ENCODE measurements at regions of chr12 and their contacts with region 1.

Region 1: GRCh38 chr12:49188914-49189367 is at the start of gene TUBA1A:
- DNase-seq: peak; percentile 100
- H3K4me3 ChIP-seq: peak within 1 kb of the TSS; percentile 94
- H3K27ac ChIP-seq: peak within 1 kb of the TSS; percentile 89
- H3K4me1 ChIP-seq: peaks cover 21% of the 10 kb centered on the region
- H3K27me3 ChIP-seq: no peaks in the 10 kb centered on the region
- CTCF ChIP-seq: no peak
- total RNA-seq, gene TUBA1A: 421 and 504 TPM in 2 replicates

Region 2: DNA sequence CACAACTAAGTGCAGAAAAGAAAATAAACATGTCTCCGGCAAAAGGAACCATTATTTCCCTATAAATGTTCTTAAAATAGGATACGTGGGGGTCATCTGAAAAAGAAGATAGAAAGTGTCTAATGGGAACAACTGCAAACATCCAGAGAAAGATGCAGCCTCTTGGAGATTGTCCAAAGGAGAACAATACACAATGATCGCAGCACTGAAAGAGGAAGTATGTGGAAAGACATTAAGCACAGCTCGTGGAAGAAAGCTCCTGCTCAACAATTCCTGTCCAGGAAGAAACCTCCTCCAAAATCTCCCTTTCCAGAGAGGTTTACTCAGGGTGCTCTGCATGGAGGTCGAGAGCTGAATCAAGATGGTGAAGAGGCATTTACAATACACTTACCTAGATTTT is 616.6 kb before region 1 on chr12:
- CTCF ChIA-PET with region 1: no interaction called
- POLR2A ChIA-PET with region 1: no interaction called
- intact Hi-C with region 1: no loop called
- DNase-seq: peak; percentile 11
- H3K4me3 ChIP-seq: no peak overlapping the region
- H3K27ac ChIP-seq: no peak overlapping the region
- H3K4me1 ChIP-seq: no peaks in the 10 kb centered on the region
- H3K27me3 ChIP-seq: peaks cover 6% of the 10 kb centered on the region
- CTCF ChIP-seq: no peak

Region 3: GRCh38 chr12:48973941-48974673 is 214.8 kb before region 1 on chr12:
- CTCF ChIA-PET with region 1: no interaction called
- POLR2A ChIA-PET with region 1: no interaction called
- intact Hi-C with region 1: no loop called
- DNase-seq: no peak
- H3K4me3 ChIP-seq: no peak overlapping the region
- H3K27ac ChIP-seq: no peak overlapping the region
- H3K4me1 ChIP-seq: peaks cover 25% of the 10 kb centered on the region
- H3K27me3 ChIP-seq: peaks cover 66% of the 10 kb centered on the region
- CTCF ChIP-seq: peak; percentile 67

Region 4: DNA sequence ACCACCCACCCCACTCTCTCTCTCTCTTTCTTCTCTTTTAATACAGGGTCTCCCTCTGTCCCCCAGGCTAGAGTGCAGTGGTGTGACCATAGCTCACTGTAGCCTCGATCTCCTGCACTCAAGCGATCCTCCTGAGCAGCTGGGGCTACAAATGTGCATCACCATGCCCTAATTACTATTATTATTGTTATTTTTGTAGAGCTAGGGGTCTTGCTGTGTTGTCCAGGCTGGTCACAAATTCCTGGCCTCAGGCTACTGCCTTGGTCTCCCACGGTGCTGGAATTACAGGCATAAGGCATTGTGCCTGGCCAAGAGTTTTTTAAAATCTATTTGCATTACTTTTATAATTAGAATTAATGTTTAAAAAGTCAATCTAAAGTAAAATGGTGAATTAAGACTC is 34.7 kb before region 1 on chr12:
- CTCF ChIA-PET with region 1: no interaction called
- POLR2A ChIA-PET with region 1: interaction called, 16 read pairs
- intact Hi-C with region 1: no loop called
- DNase-seq: no peak
- H3K4me3 ChIP-seq: no peak overlapping the region
- H3K27ac ChIP-seq: no peak overlapping the region
- H3K4me1 ChIP-seq: no peaks in the 10 kb centered on the region
- H3K27me3 ChIP-seq: no peaks in the 10 kb centered on the region
- CTCF ChIP-seq: no peak

Region 5: GRCh38 chr12:49232940-49233841 is 44.2 kb after region 1 on chr12:
- CTCF ChIA-PET with region 1: interaction called, 5 read pairs
- POLR2A ChIA-PET with region 1: interaction called, 13 read pairs
- intact Hi-C with region 1: loop called (anchors 2 kb)
- DNase-seq: peak; percentile 89
- H3K4me3 ChIP-seq: peak overlapping the region; percentile 9
- H3K27ac ChIP-seq: peak overlapping the region; percentile 60
- H3K4me1 ChIP-seq: peaks cover 21% of the 10 kb centered on the region
- H3K27me3 ChIP-seq: no peaks in the 10 kb centered on the region
- CTCF ChIP-seq: peak; percentile 29; the same call in 1 of the 2 replicates

Measured in A673 (cell line).